Naive thymus-derived CD4-positive, alpha-beta T cell (primary cell): ENCODE measurements at regions of chr16 and their contacts with region 1.

Region 1: DNA sequence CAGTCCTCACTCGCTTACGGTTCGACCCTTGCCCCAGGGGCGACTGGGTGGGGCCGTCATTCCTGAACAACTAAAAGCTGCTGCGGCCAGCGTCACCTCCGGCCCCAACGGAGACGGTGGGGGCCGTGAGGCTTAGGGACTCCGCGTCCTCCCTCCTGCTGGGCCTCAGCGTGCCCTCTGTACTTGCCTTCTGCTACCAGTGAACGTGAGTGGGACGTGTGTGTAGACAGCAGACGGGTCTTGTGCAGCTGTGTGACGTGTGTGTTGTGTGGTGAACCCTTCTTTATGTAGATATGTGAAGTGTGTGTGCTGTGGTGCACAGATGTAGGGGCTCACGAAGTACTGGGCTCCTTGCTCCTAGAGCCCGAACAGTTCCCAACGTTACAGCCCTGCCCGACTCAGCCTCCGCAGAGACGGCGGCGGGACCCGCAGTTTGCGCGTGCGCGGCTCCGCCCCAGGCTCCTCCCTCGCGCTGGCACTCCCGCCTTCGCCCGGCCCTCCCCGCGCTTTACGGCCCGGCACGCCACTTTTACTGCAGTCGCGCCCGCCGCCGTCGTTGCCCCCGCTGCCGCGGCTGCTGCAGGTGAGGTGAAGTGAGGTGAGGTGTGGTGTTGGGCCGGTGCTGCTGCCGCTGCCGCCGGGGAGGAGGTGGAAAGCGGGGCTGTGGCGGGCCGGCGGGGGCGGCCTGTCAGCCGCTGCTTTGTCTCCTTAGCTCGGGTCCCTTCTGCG is at the start of gene PHAF1:
- DNase-seq: peak; percentile 93 to 99 (median 97)
- ATAC-seq: peak; percentile 95
- H3K4me3 ChIP-seq: peak within 1 kb of the TSS; percentile 91
- H3K4me3 Mint-ChIP-seq: peak within 1 kb of the TSS; percentile 91 to 96 (median 94)
- H3K27ac ChIP-seq: peak within 1 kb of the TSS; percentile 78
- H3K27ac Mint-ChIP-seq: peak within 1 kb of the TSS; percentile 81 to 95 (median 87)
- H3K4me1 ChIP-seq: peaks cover 9 to 11% of the 10 kb centered on the region in 2 donors
- H3K4me1 Mint-ChIP-seq: peaks cover 19 to 43% (median 31%) of the 10 kb centered on the region in 7 donors
- H3K27me3 ChIP-seq: no peaks in the 10 kb centered on the region
- H3K27me3 Mint-ChIP-seq: no peaks in the 10 kb centered on the region
- total RNA-seq, gene PHAF1: 17.8 to 29.6 (median 21.2) TPM

Region 2: DNA sequence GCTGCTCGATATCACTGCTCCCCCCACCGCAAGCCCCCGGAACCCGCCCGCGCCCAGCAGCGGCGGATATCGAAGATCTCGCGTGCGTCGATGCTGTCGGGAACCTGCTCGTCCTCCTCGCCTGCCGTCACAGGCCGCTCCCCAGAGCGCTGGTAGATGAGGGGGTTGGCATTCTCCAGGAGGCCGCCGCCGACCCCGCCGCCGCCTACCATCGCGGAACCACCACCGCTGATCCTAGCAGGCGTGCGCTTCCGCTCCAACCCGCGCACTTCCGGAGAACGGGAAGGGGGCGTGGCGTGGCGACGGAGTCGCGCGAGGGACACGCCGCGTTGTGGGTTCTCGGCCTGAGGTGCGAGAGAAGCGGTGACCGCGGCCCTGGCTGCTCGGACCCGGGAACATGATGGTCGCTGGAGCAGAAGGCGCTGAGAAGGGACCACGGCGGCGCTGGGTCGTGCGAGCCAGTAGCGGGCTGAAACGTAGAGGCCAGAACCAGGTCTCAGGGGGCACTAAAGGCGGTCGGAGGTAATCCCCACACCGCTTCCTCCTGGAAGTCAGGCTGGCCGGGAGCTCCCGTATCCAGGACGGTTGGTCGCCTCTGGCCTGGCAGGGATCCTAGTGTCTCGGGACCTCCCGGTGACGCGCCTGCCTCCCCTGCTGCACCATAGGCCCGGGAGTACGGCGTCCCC is 175.3 kb before region 1 on chr16 and contains the start of gene CIAO2B:
- CTCF ChIA-PET with region 1: no interaction called
- POLR2A ChIA-PET with region 1: no interaction called
- intact Hi-C with region 1: loop called in 1 of 2 experiments (anchors 1 kb)
- DNase-seq: peak; percentile 86 to 95 (median 91)
- ATAC-seq: peak; percentile 93
- H3K4me3 ChIP-seq: peak within 1 kb of the TSS; percentile 96
- H3K4me3 Mint-ChIP-seq: peak within 1 kb of the TSS; percentile 91 to 99 (median 98)
- H3K27ac ChIP-seq: peak within 1 kb of the TSS; percentile 97
- H3K27ac Mint-ChIP-seq: peak within 1 kb of the TSS; percentile 96 to 99 (median 98)
- H3K4me1 ChIP-seq: peaks cover 24 to 35% of the 10 kb centered on the region in 2 donors
- H3K4me1 Mint-ChIP-seq: peaks cover 38 to 63% (median 54%) of the 10 kb centered on the region in 7 donors
- H3K27me3 ChIP-seq: no peaks in the 10 kb centered on the region
- H3K27me3 Mint-ChIP-seq: no peaks in the 10 kb centered on the region
- total RNA-seq, gene CIAO2B: 47.0 to 116 (median 58.5) TPM

Region 3: DNA sequence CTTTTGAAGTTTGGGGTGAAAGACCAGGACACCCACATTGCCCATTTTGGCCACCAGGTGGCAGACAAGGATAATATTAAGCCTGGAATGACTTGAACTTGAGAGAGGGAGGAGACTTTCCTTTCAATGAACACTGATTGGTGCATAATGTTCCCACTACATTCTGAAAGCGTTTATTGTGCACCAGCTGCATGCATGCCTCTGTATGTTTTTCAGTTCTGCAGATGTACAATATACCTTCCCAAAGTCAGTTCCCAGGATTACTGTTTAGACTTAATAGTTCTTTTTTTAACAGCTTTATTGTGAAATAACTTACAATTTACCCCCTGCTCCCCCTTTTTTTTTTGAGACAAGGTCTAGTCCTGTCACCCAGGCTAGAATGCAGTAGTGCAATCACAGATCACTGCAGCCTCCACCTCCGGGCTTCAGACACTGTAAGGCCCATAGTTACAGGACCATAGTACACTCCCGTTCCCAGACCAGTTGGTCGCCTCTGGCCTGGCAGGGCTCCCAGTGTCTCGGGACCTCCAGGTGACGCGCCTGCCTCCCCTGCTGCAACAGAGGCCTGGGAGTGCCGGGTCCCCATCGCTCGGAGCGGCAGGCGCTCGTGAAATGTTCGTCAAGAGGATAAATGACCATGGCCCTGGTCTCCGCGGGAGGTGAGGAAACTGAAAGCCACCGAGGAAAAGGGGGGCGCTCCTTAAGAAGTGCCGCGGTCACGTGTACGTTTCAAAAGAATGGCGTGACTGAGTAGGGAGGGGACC is 162.1 kb before region 1 on chr16:
- CTCF ChIA-PET with region 1: no interaction called
- POLR2A ChIA-PET with region 1: no interaction called
- intact Hi-C with region 1: loop called in 1 of 2 experiments (anchors 1 kb)
- DNase-seq: peak; percentile 64 to 86 (median 80)
- ATAC-seq: peak; percentile 97
- H3K4me3 ChIP-seq: peak overlapping the region; percentile 45
- H3K4me3 Mint-ChIP-seq: peak overlapping the region; percentile 83 to 95 (median 92)
- H3K27ac ChIP-seq: peak overlapping the region; percentile 26
- H3K27ac Mint-ChIP-seq: peak overlapping the region in 3 of 9 donors; percentile 13 to 50 (median 29)
- H3K4me1 ChIP-seq: peaks cover 0 to 4% of the 10 kb centered on the region in 2 donors
- H3K4me1 Mint-ChIP-seq: peaks cover 13 to 24% (median 18%) of the 10 kb centered on the region in 7 donors
- H3K27me3 ChIP-seq: no peaks in the 10 kb centered on the region
- H3K27me3 Mint-ChIP-seq: peaks cover 23 to 39% (median 32%) of the 10 kb centered on the region in 5 donors

Region 4: DNA sequence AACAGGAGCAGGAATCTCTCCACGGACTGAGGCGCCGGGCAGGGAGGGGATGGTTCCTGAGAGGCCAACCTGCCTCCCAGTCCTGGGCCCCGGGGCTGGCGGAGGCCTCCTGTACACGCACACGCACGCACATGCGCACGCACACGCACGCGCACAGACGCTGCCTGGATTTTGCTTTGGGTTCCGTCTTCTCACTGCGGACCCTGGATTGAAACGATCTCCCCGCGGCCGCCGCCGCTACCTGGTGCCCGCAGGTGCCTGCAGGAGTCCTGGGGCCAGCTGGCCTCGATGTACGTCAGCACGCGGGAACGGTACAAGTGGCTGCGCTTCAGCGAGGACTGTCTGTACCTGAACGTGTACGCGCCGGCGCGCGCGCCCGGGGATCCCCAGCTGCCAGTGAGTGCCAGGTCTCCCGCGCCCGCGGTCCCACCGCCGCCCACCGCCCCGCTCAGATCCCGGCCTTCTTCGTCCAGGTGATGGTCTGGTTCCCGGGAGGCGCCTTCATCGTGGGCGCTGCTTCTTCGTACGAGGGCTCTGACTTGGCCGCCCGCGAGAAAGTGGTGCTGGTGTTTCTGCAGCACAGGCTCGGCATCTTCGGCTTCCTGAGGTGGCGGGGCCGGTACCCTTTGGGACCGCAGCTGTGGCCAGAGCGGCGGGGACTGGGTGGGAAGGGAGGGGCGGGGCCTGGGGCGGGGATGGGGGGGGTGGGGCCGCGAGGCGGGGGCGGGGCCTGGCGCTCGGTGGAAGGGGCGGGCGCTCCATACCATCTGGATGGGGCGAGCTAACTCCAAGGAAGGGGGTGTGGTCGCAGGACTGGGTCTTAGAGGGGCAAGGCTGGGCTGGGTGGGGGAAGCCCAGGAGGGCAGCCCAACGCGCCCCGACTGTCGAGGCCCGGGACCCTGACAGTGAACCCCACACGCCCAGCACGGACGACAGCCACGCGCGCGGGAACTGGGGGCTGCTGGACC is 108.9 kb before region 1 on chr16:
- CTCF ChIA-PET with region 1: no interaction called
- POLR2A ChIA-PET with region 1: no interaction called
- intact Hi-C with region 1: loop called in 1 of 2 experiments (anchors 1 kb)
- DNase-seq: peak; percentile 39 to 73 (median 61)
- ATAC-seq: peak; percentile 81
- H3K4me3 ChIP-seq: peak overlapping the region; percentile 75
- H3K4me3 Mint-ChIP-seq: peak overlapping the region; percentile 65 to 88 (median 84)
- H3K27ac ChIP-seq: peak overlapping the region; percentile 72
- H3K27ac Mint-ChIP-seq: peak overlapping the region; percentile 68 to 89 (median 80)
- H3K4me1 ChIP-seq: peaks cover 4 to 9% of the 10 kb centered on the region in 2 donors
- H3K4me1 Mint-ChIP-seq: peaks cover 6 to 42% (median 14%) of the 10 kb centered on the region in 7 donors
- H3K27me3 ChIP-seq: no peaks in the 10 kb centered on the region
- H3K27me3 Mint-ChIP-seq: no peaks in the 10 kb centered on the region

Region 5: DNA sequence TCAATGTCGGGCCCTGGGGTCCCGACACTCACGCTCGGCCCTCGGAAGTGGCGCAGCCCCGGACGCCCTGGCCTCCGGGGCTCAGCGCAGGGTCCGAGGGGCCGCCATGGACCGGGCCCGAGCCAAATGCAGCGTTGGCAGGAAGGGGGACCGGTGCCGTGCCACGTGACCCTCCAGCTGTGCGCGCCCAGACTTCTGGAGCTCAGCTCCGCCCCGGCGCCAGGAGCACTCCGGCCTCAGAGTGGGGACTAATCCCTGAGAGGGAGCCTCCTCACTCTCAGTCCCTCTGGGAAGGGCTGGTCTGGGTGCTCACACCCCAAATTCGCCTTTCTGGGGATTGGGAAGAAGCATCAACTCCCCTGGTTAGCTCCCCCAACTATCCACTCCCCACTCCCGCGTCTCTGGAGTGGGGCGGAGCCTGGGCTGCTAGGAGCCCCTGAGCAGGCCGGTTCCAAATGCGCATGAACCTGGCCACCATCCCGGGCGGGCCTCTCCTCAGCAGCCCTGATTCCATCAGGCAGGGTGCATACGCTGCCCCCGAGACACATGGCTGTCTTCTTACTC is 41.3 kb after region 1 on chr16 and contains the start of gene B3GNT9:
- CTCF ChIA-PET with region 1: interaction called, 3 read pairs
- POLR2A ChIA-PET with region 1: interaction called, 3 read pairs
- intact Hi-C with region 1: loop called in 1 of 2 experiments (anchors 2 kb)
- DNase-seq: no peak
- ATAC-seq: peak; percentile 14
- H3K4me3 ChIP-seq: peak within 1 kb of the TSS; percentile 63
- H3K4me3 Mint-ChIP-seq: peak within 1 kb of the TSS; percentile 62 to 82 (median 74)
- H3K27ac ChIP-seq: no peak within 1 kb of the TSS
- H3K27ac Mint-ChIP-seq: peak within 1 kb of the TSS in 3 of 9 donors; percentile 32 to 71 (median 51)
- H3K4me1 ChIP-seq: peaks cover 3 to 9% of the 10 kb centered on the region in 2 donors
- H3K4me1 Mint-ChIP-seq: peaks cover 12 to 42% (median 19%) of the 10 kb centered on the region in 7 donors
- H3K27me3 ChIP-seq: no peaks in the 10 kb centered on the region
- H3K27me3 Mint-ChIP-seq: peaks cover 0 to 12% (median 6%) of the 10 kb centered on the region in 5 donors
- total RNA-seq, gene B3GNT9: 1.9 to 13.2 (median 2.7) TPM

Region 6: GRCh38 chr16:67183627-67184328 is 74.2 kb after region 1 on chr16 and contains the start of gene MATCAP1:
- CTCF ChIA-PET with region 1: no interaction called
- POLR2A ChIA-PET with region 1: no interaction called
- intact Hi-C with region 1: loop called (anchors 2 kb)
- DNase-seq: peak; percentile 90 to 98 (median 96)
- ATAC-seq: peak; percentile 97
- H3K4me3 ChIP-seq: peak within 1 kb of the TSS; percentile 79
- H3K4me3 Mint-ChIP-seq: peak within 1 kb of the TSS in 5 of 10 donors; percentile 48 to 91 (median 86)
- H3K27ac ChIP-seq: peak within 1 kb of the TSS; percentile 97
- H3K27ac Mint-ChIP-seq: peak within 1 kb of the TSS in 2 of 9 donors; percentile 58 to 67
- H3K4me1 ChIP-seq: peaks cover 12 to 15% of the 10 kb centered on the region in 2 donors
- H3K4me1 Mint-ChIP-seq: peaks cover 8 to 24% (median 13%) of the 10 kb centered on the region in 7 donors
- H3K27me3 ChIP-seq: no peaks in the 10 kb centered on the region
- H3K27me3 Mint-ChIP-seq: peaks cover 4 to 15% (median 4%) of the 10 kb centered on the region in 5 donors
- total RNA-seq, gene MATCAP1: 4.3 to 88.1 (median 11.0) TPM

Region 7: DNA sequence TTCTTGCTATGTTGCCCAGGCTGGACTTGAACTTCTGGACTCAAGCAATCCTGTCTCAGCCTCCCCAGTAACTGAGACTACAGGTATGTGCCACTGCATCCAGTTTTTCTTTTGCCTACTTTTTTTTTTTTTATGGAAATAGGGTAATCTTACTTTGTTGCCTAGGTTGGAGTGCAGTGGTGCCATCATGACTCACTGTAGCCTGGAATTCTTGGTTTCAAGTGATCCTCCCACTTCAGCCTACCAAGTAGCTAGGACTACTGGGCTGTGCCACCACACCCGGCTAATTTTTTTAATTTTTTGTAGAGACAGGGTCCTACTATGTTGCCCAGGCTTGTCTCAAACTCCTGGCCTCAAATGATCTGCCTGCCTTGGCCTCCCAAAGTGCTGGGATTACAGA is 227.1 kb after region 1 on chr16:
- CTCF ChIA-PET with region 1: no interaction called
- POLR2A ChIA-PET with region 1: no interaction called
- intact Hi-C with region 1: no loop called
- DNase-seq: no peak
- ATAC-seq: no peak
- H3K4me3 ChIP-seq: no peak overlapping the region
- H3K4me3 Mint-ChIP-seq: no peak overlapping the region
- H3K27ac ChIP-seq: no peak overlapping the region
- H3K27ac Mint-ChIP-seq: no peak overlapping the region
- H3K4me1 ChIP-seq: no peaks in the 10 kb centered on the region
- H3K4me1 Mint-ChIP-seq: no peaks in the 10 kb centered on the region
- H3K27me3 ChIP-seq: no peaks in the 10 kb centered on the region
- H3K27me3 Mint-ChIP-seq: peaks cover 0 to 10% (median 3%) of the 10 kb centered on the region in 5 donors